Dendritic cell treated with granulocyte-macrophage colony-stimulating factor and Interleukin-4, amounts not matched to agents 40 ng/mL and 50 ng/mL, for 4 days (primary cell): ENCODE measurements at regions of chr6 and their contacts with region 1.

Region 1: GRCh38 chr6:138987640-138988468 is at the start of gene REPS1:
- H3K4me3 Mint-ChIP-seq: peak within 1 kb of the TSS; percentile 88
- H3K27ac Mint-ChIP-seq: peak within 1 kb of the TSS; percentile 96
- H3K4me1 Mint-ChIP-seq: peaks cover 36% of the 10 kb centered on the region
- H3K27me3 Mint-ChIP-seq: no peaks in the 10 kb centered on the region

Region 2: DNA sequence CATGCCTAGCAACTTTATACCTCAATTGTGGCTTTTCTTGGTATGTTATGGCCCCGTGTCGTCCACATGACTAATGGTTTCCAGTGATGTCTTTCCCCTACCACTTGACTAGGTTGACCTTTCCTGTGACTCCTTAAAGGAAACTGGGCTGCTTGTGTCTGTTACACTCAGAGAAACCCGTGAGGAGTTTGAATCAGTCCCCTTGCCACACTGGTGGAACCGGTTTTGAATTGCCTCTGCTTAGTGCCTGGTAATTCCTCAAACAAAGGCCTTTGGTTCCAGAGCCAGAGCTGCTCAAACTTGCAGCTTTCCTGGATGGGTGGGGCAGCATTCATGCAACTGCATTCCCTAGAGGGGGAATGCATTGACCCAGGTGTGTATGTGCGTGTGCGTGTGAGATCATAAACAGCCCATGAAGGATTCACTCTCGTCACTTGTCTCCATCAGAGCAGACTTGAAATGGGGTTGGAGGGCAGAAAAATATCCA is 170.0 kb before region 1 on chr6:
- intact Hi-C with region 1: loop called (anchors 1 kb)
- H3K4me3 Mint-ChIP-seq: no peak overlapping the region
- H3K27ac Mint-ChIP-seq: no peak overlapping the region
- H3K4me1 Mint-ChIP-seq: peaks cover 13% of the 10 kb centered on the region
- H3K27me3 Mint-ChIP-seq: no peaks in the 10 kb centered on the region

Region 3: DNA sequence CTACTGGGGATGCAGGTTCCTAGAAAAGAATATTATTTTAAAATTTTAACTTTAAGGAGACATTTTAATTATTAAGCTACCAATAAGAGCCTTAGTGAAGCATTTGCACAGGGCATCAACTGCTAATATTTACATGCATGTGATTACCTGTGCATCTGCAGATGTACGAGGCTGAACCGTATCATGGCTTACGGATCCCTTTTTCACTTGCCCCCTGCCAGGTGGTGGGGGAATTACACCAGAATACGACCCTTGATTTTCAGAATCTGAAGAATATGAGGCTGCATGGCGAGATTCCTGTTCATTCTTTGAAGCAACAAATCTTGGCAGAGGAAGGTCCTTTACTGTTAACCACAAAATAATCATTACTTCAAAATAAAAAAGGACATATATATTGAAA is 42.5 kb before region 1 on chr6:
- intact Hi-C with region 1: loop called (anchors 5 kb)
- H3K4me3 Mint-ChIP-seq: no peak overlapping the region
- H3K27ac Mint-ChIP-seq: no peak overlapping the region
- H3K4me1 Mint-ChIP-seq: peaks cover 21% of the 10 kb centered on the region
- H3K27me3 Mint-ChIP-seq: no peaks in the 10 kb centered on the region

Region 4: DNA sequence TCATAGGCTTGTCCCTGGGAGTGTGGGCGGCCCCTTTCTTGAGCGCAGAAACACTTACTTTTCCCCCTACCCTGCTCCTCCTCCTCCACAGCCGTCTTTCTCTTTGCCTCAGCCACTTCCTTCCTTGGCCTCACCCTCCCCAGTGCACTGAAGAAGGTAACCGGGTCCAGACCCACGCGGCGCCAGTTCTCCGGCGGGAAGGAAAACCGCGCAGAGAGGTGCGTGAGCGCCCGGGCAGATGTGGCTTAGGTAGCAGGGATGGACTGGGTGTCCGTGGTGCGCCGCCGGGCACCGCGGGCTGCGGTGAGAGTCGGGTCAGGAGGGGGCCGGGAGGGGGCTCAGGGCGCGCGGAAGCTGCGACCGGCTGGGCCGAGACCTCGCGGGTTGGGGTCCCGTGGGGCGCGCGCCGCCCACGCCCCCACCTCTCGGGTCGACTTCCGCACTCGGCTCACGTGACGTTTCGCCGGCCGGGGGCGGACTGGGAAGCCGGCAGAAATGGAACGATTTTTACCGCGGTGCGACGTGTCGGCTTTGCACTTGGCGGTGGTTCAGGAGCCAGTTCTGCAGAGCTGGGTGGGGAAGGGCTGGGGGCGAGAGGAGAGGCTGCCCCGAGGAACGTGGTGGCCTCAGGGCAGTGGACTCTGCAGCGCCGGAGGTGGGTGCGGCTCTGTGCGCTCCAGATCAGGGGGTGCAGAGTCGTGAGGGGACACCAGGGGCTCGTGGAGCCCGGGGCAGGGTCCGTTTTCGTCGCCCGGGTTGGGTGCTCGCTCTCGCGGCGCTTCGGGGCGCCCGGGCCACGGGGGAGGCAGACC is 41.0 kb after region 1 on chr6 and contains the start of gene ABRACL:
- intact Hi-C with region 1: loop called (anchors 2 kb)
- H3K4me3 Mint-ChIP-seq: no peak within 1 kb of the TSS
- H3K27ac Mint-ChIP-seq: no peak within 1 kb of the TSS
- H3K4me1 Mint-ChIP-seq: peaks cover 28% of the 10 kb centered on the region
- H3K27me3 Mint-ChIP-seq: peaks cover 2% of the 10 kb centered on the region